ENCODE measurements at regions of chr16 and their contacts with region 1.

Region 1: GRCh38 chr16:21584817-21585216 is 14.6 kb upstream of the METTL9 start:
- DNase-seq: no peak
- H3K4me3 Mint-ChIP-seq: no peak overlapping the region
- H3K27ac Mint-ChIP-seq: no peak overlapping the region
- H3K4me1 Mint-ChIP-seq: peaks cover 3% of the 10 kb centered on the region
- H3K27me3 Mint-ChIP-seq: peaks cover 3% of the 10 kb centered on the region

Region 2: DNA sequence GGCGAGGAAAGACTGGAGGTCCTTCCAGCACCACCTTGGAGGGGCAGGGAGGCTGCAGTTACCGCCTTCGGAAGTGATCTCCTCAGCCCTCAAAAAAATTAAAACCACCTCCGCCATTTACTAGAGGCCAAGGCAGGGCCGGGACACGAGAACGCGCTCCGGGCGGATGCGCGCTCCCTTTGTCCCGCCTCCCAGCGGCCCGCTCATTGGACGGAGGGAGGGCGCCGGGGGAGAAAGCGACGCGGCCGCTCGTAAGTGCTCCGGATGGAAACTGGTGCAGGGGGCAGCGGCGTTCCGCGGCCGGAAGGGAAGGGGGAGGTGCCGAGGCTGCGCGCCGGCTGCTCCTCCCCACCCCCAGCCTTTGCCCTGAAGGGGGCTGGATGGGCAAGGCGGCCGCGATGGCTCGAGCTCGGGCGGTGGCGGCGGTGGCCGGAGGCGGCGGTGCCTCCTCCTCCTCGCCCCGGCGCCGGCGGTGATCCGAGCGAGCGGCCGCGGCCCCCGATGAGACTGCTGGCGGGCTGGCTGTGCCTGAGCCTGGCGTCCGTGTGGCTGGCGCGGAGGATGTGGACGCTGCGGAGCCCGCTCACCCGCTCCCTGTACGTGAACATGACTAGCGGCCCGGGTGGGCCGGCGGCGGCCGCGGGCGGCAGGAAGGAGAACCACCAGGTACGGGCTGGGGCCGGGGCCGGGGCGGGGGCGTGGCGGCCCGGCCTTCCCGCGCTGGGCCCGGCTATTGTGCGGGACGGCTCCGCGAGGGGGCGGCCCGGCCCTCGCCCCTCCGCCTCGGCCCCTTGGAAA is 14.6 kb after region 1 on chr16 and contains the start of gene METTL9:
- intact Hi-C with region 1: no loop called
- DNase-seq: peak; percentile 93
- H3K4me3 Mint-ChIP-seq: peak within 1 kb of the TSS; percentile 87
- H3K27ac Mint-ChIP-seq: peak within 1 kb of the TSS; percentile 92
- H3K4me1 Mint-ChIP-seq: peaks cover 41% of the 10 kb centered on the region
- H3K27me3 Mint-ChIP-seq: no peaks in the 10 kb centered on the region
- total RNA-seq, gene METTL9: 73.9 and 75.8 TPM in 2 replicates

Region 3: GRCh38 chr16:21638573-21638975 is 53.8 kb after region 1 on chr16:
- intact Hi-C with region 1: loop called (anchors 2 kb)
- DNase-seq: no peak
- H3K4me3 Mint-ChIP-seq: no peak overlapping the region
- H3K27ac Mint-ChIP-seq: peak overlapping the region; percentile 67
- H3K4me1 Mint-ChIP-seq: peaks cover 16% of the 10 kb centered on the region
- H3K27me3 Mint-ChIP-seq: no peaks in the 10 kb centered on the region

Measured in activated T-helper 2 cell treated with anti-CD3 and anti-CD28 coated beads, Interferon-gamma antibody, Interleukin-2, Interleukin-4, amounts not matched to agents 10 μg/mL and 5 μg/mL and 100 μg/mL, durations not matched to agents 14 hours and 24 hours and 36 hours (primary cell).